ENCODE measurements at regions of chr5 and their contacts with region 1.

Region 1: GRCh38 chr5:149141224-149141956 is at the start of gene ABLIM3:
- DNase-seq: peak; percentile 55
- ATAC-seq: peak; percentile 84
- H3K4me3 ChIP-seq: peak within 1 kb of the TSS; percentile 70
- H3K27ac ChIP-seq: peak within 1 kb of the TSS; percentile 67
- H3K4me1 ChIP-seq: peaks cover 11% of the 10 kb centered on the region
- H3K27me3 ChIP-seq: no peaks in the 10 kb centered on the region
- CTCF ChIP-seq: peak; percentile 95
- POLR2A ChIP-seq: peak; percentile 72
- RAD21 ChIP-seq: peak; percentile 81
- total RNA-seq, gene ABLIM3: 33.3 and 34.2 TPM in 2 replicates

Region 2: GRCh38 chr5:149153751-149154610 is 12.6 kb after region 1 on chr5:
- CTCF ChIA-PET with region 1: interaction called, 5 read pairs
- POLR2A ChIA-PET with region 1: no interaction called
- dilution Hi-C with region 1: no loop called
- in situ Hi-C with region 1: no loop called
- intact Hi-C with region 1: loop called (anchors 1 kb)
- DNase-seq: peak; percentile 75
- ATAC-seq: peak; percentile 38
- H3K4me3 ChIP-seq: no peak overlapping the region
- H3K27ac ChIP-seq: peak overlapping the region; percentile 38
- H3K4me1 ChIP-seq: peaks cover 39% of the 10 kb centered on the region
- H3K27me3 ChIP-seq: no peaks in the 10 kb centered on the region
- CTCF ChIP-seq: no peak
- POLR2A ChIP-seq: no peak
- RAD21 ChIP-seq: no peak

Region 3: GRCh38 chr5:149212198-149212951 is 71.0 kb after region 1 on chr5:
- CTCF ChIA-PET with region 1: interaction called, 4 read pairs
- POLR2A ChIA-PET with region 1: no interaction called
- dilution Hi-C with region 1: no loop called
- in situ Hi-C with region 1: loop called (anchors 5 kb)
- intact Hi-C with region 1: no loop called
- DNase-seq: peak; percentile 100
- ATAC-seq: peak; percentile 91
- H3K4me3 ChIP-seq: no peak overlapping the region
- H3K27ac ChIP-seq: peak overlapping the region; percentile 77
- H3K4me1 ChIP-seq: peaks cover 42% of the 10 kb centered on the region
- H3K27me3 ChIP-seq: no peaks in the 10 kb centered on the region
- CTCF ChIP-seq: no peak
- POLR2A ChIP-seq: no peak
- RAD21 ChIP-seq: no peak; the same call in 1 of the 2 replicates